ENCODE measurements at regions of chr11 and their contacts with region 1.

Region 1: GRCh38 chr11:118435893-118436624 is at the start of gene KMT2A:
- DNase-seq: peak; percentile 89 to 99 (median 95)
- H3K4me3 ChIP-seq: peak within 1 kb of the TSS; percentile 90 to 92
- H3K4me3 Mint-ChIP-seq: peak within 1 kb of the TSS; percentile 88 to 99 (median 94)
- H3K27ac ChIP-seq: peak within 1 kb of the TSS; percentile 92
- H3K27ac Mint-ChIP-seq: peak within 1 kb of the TSS; percentile 94 to 99 (median 97)
- H3K4me1 ChIP-seq: peaks cover 31% of the 10 kb centered on the region
- H3K4me1 Mint-ChIP-seq: peaks cover 26 to 65% (median 32%) of the 10 kb centered on the region in 4 donors
- H3K27me3 ChIP-seq: no peaks in the 10 kb centered on the region
- H3K27me3 Mint-ChIP-seq: peaks cover 1 to 7% of the 10 kb centered on the region in 2 donors
- total RNA-seq, gene KMT2A: 185 to 202 TPM

Region 2: GRCh38 chr11:118304568-118305248 is 131.4 kb before region 1 on chr11 and contains the start of gene CD3E:
- CTCF ChIA-PET with region 1: no interaction called
- POLR2A ChIA-PET with region 1: interaction called, 3 read pairs
- intact Hi-C with region 1: loop called (anchors 5 kb)
- DNase-seq: peak; percentile 76 to 83 (median 79)
- H3K4me3 ChIP-seq: peak within 1 kb of the TSS; percentile 96 to 97
- H3K4me3 Mint-ChIP-seq: peak within 1 kb of the TSS; percentile 99 to 100 (median 100)
- H3K27ac ChIP-seq: peak within 1 kb of the TSS; percentile 91
- H3K27ac Mint-ChIP-seq: peak within 1 kb of the TSS; percentile 98 to 100 (median 99)
- H3K4me1 ChIP-seq: peaks cover 68% of the 10 kb centered on the region
- H3K4me1 Mint-ChIP-seq: peaks cover 46 to 94% (median 66%) of the 10 kb centered on the region in 4 donors
- H3K27me3 ChIP-seq: no peaks in the 10 kb centered on the region
- H3K27me3 Mint-ChIP-seq: no peaks in the 10 kb centered on the region
- total RNA-seq, gene CD3E: 581 to 618 TPM

Region 3: DNA sequence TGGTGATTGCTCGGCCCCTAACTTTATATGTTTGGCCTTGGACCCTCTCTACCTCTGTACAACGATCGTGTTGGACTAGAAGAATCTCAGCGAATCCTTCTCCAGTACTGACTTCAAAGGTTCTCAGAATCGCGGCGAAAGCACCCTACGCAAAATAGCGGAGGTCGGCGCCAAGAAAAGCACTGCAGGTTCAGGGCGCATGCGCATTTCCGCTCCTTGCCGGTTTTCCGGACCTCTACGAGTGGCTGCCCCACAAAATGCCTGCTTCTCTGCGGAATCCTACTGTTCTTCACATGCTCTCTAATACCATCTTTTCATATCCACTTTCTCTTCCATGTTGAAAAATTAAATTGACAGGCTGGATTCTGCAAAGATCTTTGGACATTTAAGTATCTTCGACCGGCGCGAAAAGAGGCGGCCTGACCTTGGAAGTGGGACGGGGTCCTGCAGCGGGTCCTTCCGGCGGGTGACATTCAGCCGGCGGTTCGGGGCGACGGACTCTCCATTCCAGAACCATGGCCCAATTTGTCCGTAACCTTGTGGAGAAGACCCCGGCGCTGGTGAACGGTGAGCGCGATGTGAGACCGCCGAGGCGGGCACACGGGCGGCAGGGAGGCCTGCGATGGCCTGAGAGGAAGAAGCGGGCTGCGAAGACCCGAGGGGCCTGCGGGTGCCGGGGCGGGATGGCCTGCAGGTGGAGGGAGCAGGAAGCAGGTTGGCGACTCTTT is 34.7 kb before region 1 on chr11 and contains the start of gene ATP5MG:
- CTCF ChIA-PET with region 1: interaction called, 9 read pairs
- POLR2A ChIA-PET with region 1: interaction called, 163 read pairs
- intact Hi-C with region 1: loop called (anchors 1 kb)
- DNase-seq: peak; percentile 92 to 94 (median 94)
- H3K4me3 ChIP-seq: peak within 1 kb of the TSS; percentile 87 to 93
- H3K4me3 Mint-ChIP-seq: peak within 1 kb of the TSS; percentile 91 to 99 (median 96)
- H3K27ac ChIP-seq: peak within 1 kb of the TSS; percentile 82
- H3K27ac Mint-ChIP-seq: peak within 1 kb of the TSS; percentile 99 to 100 (median 99)
- H3K4me1 ChIP-seq: peaks cover 72% of the 10 kb centered on the region
- H3K4me1 Mint-ChIP-seq: peaks cover 39 to 87% (median 65%) of the 10 kb centered on the region in 4 donors
- H3K27me3 ChIP-seq: no peaks in the 10 kb centered on the region
- H3K27me3 Mint-ChIP-seq: no peaks in the 10 kb centered on the region
- total RNA-seq, gene ATP5MG: 158 to 161 TPM

Region 4: GRCh38 chr11:118417801-118418200 is 18.3 kb before region 1 on chr11:
- CTCF ChIA-PET with region 1: no interaction called
- POLR2A ChIA-PET with region 1: interaction called, 13 read pairs
- intact Hi-C with region 1: no loop called
- DNase-seq: no peak
- H3K4me3 ChIP-seq: no peak overlapping the region
- H3K4me3 Mint-ChIP-seq: no peak overlapping the region
- H3K27ac ChIP-seq: no peak overlapping the region
- H3K27ac Mint-ChIP-seq: no peak overlapping the region
- H3K4me1 ChIP-seq: no peaks in the 10 kb centered on the region
- H3K4me1 Mint-ChIP-seq: peaks cover 0 to 2% (median 0%) of the 10 kb centered on the region in 4 donors
- H3K27me3 ChIP-seq: no peaks in the 10 kb centered on the region
- H3K27me3 Mint-ChIP-seq: no peaks in the 10 kb centered on the region

Region 5: DNA sequence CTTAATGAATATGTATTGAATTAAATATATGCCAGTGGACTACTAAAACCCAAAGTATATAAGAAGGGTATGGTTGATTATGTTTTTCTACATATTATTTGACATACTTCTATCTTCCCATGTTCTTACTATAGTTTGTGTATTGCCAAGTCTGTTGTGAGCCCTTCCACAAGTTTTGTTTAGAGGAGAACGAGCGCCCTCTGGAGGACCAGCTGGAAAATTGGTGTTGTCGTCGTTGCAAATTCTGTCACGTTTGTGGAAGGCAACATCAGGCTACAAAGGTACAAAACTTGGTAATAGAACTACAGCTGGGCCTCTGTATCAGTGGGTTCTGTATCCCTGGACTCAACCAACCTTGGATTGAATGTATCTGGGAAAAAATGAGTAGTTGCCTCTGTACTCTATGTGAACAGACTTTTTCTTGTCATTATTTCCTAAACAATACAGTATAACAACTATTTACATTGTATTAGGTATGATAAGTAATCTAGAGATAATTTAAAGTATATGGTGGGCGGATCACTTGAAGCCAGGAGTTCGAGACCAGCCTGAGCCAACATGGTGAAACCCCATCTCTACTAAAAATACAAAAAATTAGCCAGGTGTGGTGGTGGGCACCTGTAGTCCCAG is 52.5 kb after region 1 on chr11:
- CTCF ChIA-PET with region 1: interaction called, 3 read pairs
- POLR2A ChIA-PET with region 1: interaction called, 4 read pairs
- intact Hi-C with region 1: loop called (anchors 1 kb)
- DNase-seq: peak; percentile 79 to 83 (median 81)
- H3K4me3 ChIP-seq: no peak overlapping the region
- H3K4me3 Mint-ChIP-seq: no peak overlapping the region
- H3K27ac ChIP-seq: peak overlapping the region; percentile 10
- H3K27ac Mint-ChIP-seq: peak overlapping the region; percentile 1 to 79 (median 13)
- H3K4me1 ChIP-seq: no peaks in the 10 kb centered on the region
- H3K4me1 Mint-ChIP-seq: peaks cover 0 to 5% (median 4%) of the 10 kb centered on the region in 4 donors
- H3K27me3 ChIP-seq: no peaks in the 10 kb centered on the region
- H3K27me3 Mint-ChIP-seq: no peaks in the 10 kb centered on the region

Region 6: DNA sequence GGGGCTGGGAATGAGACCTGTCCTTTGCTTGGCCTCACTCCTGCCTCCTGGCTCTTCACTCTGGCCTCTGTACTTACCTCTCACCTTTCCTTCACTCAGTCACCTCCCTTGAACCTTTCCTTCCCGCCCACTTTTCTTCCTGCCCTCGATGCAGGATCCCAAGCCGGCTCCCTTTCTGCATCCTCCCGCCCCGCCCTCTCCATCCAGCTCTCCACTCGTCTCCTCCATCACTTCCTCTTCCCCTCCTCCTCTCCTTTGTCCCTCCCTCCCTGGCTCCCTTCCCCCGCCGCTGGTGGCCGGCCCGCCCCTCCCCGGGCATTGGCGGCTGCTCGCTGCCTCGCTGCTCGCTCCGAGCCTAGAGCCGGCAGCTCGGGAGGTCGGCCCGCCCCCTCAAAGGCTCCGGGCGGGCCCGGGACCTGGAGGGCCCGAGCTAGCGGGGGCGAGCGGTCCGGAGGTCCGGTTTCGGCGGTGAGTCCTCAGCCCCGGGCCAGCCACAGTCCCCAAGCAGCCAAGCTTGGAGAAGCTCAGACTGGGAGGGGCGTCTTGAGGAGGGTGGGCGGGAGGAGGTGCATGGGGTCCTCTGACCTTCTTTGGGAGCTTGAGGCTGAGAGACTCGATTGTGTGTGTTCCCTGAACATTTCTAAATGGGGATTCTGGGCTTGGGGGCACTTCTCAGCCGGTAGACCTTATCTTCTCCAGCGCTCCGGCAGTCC is 185.2 kb after region 1 on chr11:
- CTCF ChIA-PET with region 1: no interaction called
- POLR2A ChIA-PET with region 1: no interaction called
- intact Hi-C with region 1: no loop called
- DNase-seq: no peak
- H3K4me3 ChIP-seq: no peak overlapping the region
- H3K4me3 Mint-ChIP-seq: peak overlapping the region; percentile 14 to 78 (median 68)
- H3K27ac ChIP-seq: no peak overlapping the region
- H3K27ac Mint-ChIP-seq: peak overlapping the region in 3 of 7 donors; percentile 32 to 73 (median 47)
- H3K4me1 ChIP-seq: peaks cover 13% of the 10 kb centered on the region
- H3K4me1 Mint-ChIP-seq: peaks cover 5 to 16% (median 6%) of the 10 kb centered on the region in 4 donors
- H3K27me3 ChIP-seq: peaks cover 6% of the 10 kb centered on the region
- H3K27me3 Mint-ChIP-seq: peaks cover 9 to 11% of the 10 kb centered on the region in 2 donors

Region 7: DNA sequence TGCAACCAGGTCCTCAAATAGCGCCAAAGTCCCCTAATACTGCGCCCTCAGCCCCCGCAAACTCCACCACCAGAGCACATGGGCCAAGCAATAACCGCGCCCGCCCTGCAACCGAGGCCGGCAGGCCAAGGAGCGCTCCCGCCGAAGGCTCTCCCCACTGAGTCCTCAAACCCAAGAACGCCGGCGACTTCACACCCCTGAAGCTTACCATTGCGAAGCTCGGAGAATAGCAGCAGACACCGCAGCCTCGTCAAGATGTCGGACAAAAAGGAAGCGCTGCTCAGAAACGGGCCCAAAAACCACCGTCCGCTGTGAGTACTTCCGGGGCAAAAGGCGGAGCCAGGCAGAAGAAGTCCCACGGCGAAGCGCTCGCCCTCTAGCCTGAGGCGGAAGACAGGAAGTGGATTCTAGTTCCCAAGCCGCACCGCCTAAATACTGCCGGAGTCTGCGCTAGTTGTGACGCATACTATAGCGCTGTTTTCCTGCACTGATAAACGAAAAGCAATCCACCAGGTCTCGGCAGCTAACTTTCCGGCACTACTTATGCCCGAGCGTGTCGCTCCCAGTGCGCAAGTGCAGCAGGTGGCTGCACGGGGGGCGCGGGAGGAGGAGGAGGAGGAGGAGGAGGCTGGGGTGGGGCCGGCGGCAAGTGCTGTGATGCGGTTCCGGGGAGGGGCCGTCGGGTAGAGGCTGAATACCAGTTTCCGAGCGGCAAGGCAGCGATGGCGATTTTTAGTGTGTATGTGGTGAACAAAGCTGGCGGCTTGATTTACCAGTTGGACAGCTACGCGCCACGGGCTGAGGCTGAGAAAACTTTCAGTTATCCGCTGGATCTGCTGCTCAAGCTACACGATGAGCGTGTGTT is 582.2 kb after region 1 on chr11 and contains the starts of genes RPS25 and TRAPPC4:
- CTCF ChIA-PET with region 1: no interaction called
- POLR2A ChIA-PET with region 1: interaction called, 3 read pairs
- intact Hi-C with region 1: loop called (anchors 5 kb)
- DNase-seq: peak; percentile 96 to 98 (median 97)
- H3K4me3 ChIP-seq: peak within 1 kb of the TSS; percentile 71 to 96
- H3K4me3 Mint-ChIP-seq: peak within 1 kb of the TSS; percentile 94 to 100 (median 99)
- H3K27ac ChIP-seq: peak within 1 kb of the TSS; percentile 87
- H3K27ac Mint-ChIP-seq: peak within 1 kb of the TSS; percentile 98 to 100 (median 100)
- H3K4me1 ChIP-seq: peaks cover 52% of the 10 kb centered on the region
- H3K4me1 Mint-ChIP-seq: peaks cover 21 to 73% (median 51%) of the 10 kb centered on the region in 4 donors
- H3K27me3 ChIP-seq: no peaks in the 10 kb centered on the region
- H3K27me3 Mint-ChIP-seq: no peaks in the 10 kb centered on the region
- total RNA-seq, gene RPS25: 2,545 to 2,705 TPM
- total RNA-seq, gene TRAPPC4: 89.2 to 97.3 TPM

Region 8: DNA sequence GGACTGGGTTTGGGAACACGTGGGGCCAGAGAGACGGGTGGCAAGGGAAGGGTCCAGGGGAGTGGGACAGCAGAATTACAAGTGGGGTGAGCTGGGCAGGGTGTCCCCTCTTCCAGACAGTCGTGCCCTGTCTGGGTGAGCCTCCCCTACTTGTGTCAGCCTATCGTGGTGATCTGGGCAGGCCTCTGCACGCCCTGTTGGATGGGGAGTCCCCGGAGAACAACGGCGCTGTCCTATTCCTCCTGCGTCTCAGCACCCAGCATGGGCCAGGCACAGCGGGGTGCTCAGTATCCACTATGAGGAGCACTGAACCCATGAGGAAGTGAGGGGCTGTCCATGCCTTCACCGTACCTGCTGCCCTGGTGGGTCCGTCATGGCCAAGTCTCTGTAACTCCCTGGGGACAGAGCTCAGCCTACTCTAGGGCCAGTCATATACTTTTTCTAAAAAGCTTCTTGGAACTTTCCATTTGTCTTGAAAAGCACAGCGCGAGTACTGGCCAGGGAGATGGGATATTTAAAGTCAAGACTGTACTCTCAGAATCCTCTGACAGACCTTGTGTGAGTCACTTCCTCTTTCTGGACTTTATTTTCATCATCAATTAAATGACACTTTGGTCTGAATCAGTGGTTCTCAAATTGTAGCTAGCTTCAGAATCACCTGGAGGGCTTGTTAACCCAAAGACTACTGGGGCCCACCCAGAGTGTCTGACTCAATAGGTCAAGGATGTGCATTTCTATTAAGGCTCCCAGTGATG is 1374.6 kb after region 1 on chr11:
- CTCF ChIA-PET with region 1: no interaction called
- POLR2A ChIA-PET with region 1: no interaction called
- intact Hi-C with region 1: no loop called
- DNase-seq: no peak
- H3K4me3 ChIP-seq: no peak overlapping the region
- H3K4me3 Mint-ChIP-seq: no peak overlapping the region
- H3K27ac ChIP-seq: no peak overlapping the region
- H3K27ac Mint-ChIP-seq: no peak overlapping the region
- H3K4me1 ChIP-seq: no peaks in the 10 kb centered on the region
- H3K4me1 Mint-ChIP-seq: no peaks in the 10 kb centered on the region
- H3K27me3 ChIP-seq: no peaks in the 10 kb centered on the region
- H3K27me3 Mint-ChIP-seq: peaks cover 1 to 4% of the 10 kb centered on the region in 2 donors